ENCODE measurements at regions of chr21 and their contacts with region 1.

Region 1: GRCh38 chr21:33924079-33924765 is 8.6 kb upstream of the ATP5PO start:
- DNase-seq: peak; percentile 94
- ATAC-seq: peak; percentile 94
- H3K4me3 Mint-ChIP-seq: no peak overlapping the region
- H3K27ac Mint-ChIP-seq: no peak overlapping the region
- H3K4me1 Mint-ChIP-seq: peaks cover 15% of the 10 kb centered on the region
- H3K27me3 Mint-ChIP-seq: peaks cover 2% of the 10 kb centered on the region

Region 2: DNA sequence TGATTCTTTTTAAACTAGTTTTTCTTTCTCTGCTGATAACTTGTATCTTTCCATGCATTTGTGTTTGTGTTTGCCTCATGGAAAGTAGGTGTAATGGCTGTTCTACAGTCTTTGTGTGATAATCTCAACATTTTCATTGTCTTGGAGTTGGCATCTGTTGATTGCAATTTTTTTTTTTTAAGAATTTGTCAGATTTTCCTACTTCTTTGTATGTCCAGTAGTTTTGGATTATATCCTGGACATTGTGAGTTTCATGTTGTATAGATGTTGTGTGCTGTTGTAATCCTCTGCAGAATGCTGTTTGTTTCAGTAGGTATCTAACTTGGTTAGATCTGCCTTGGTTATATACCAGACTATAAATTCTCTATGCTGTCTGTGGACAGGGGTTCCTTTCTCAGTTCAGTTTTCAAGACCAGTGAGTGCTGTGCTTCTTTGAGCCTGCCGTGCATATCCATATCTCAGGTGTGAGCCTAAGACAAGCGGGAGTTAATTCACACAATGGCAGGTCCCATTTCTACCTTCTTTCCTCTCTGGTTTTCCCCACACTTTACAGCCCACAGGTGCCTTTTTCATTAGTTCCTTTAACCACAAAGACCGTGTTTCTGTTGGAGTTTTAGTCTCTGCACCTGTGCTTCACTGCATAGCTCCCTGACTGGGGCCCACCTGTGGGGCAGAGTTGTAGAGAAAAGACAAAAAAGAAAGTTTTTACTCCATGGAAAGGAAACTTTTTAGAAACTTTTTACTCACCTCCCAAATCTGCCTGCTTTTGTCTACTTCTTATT is 212.0 kb before region 1 on chr21:
- CTCF ChIA-PET with region 1: no interaction called
- POLR2A ChIA-PET with region 1: no interaction called
- DNase-seq: no peak
- ATAC-seq: no peak
- H3K4me3 Mint-ChIP-seq: no peak overlapping the region
- H3K27ac Mint-ChIP-seq: no peak overlapping the region
- H3K4me1 Mint-ChIP-seq: no peaks in the 10 kb centered on the region
- H3K27me3 Mint-ChIP-seq: no peaks in the 10 kb centered on the region

Region 3: GRCh38 chr21:33844104-33844889 is 79.9 kb before region 1 on chr21:
- CTCF ChIA-PET with region 1: no interaction called
- POLR2A ChIA-PET with region 1: no interaction called
- DNase-seq: no peak
- ATAC-seq: no peak
- H3K4me3 Mint-ChIP-seq: no peak overlapping the region
- H3K27ac Mint-ChIP-seq: no peak overlapping the region
- H3K4me1 Mint-ChIP-seq: no peaks in the 10 kb centered on the region
- H3K27me3 Mint-ChIP-seq: no peaks in the 10 kb centered on the region

Region 4: GRCh38 chr21:33947451-33948095 is 23.4 kb after region 1 on chr21:
- CTCF ChIA-PET with region 1: interaction called, 49 read pairs
- POLR2A ChIA-PET with region 1: interaction called, 26 read pairs
- DNase-seq: peak; percentile 91
- ATAC-seq: peak; percentile 68
- H3K4me3 Mint-ChIP-seq: peak overlapping the region; percentile 63
- H3K27ac Mint-ChIP-seq: peak overlapping the region; percentile 98
- H3K4me1 Mint-ChIP-seq: peaks cover 75% of the 10 kb centered on the region
- H3K27me3 Mint-ChIP-seq: no peaks in the 10 kb centered on the region

Region 5: GRCh38 chr21:34022627-34023335 is 98.6 kb after region 1 on chr21:
- CTCF ChIA-PET with region 1: interaction called, 21 read pairs
- POLR2A ChIA-PET with region 1: no interaction called
- DNase-seq: peak; percentile 51
- ATAC-seq: peak; percentile 54
- H3K4me3 Mint-ChIP-seq: no peak overlapping the region
- H3K27ac Mint-ChIP-seq: no peak overlapping the region
- H3K4me1 Mint-ChIP-seq: peaks cover 34% of the 10 kb centered on the region
- H3K27me3 Mint-ChIP-seq: no peaks in the 10 kb centered on the region

Region 6: GRCh38 chr21:34091607-34092006 is 167.4 kb after region 1 on chr21:
- CTCF ChIA-PET with region 1: interaction called, 36 read pairs
- POLR2A ChIA-PET with region 1: no interaction called
- DNase-seq: no peak
- ATAC-seq: no peak
- H3K4me3 Mint-ChIP-seq: no peak overlapping the region
- H3K27ac Mint-ChIP-seq: no peak overlapping the region
- H3K4me1 Mint-ChIP-seq: peaks cover 43% of the 10 kb centered on the region
- H3K27me3 Mint-ChIP-seq: no peaks in the 10 kb centered on the region

Region 7: DNA sequence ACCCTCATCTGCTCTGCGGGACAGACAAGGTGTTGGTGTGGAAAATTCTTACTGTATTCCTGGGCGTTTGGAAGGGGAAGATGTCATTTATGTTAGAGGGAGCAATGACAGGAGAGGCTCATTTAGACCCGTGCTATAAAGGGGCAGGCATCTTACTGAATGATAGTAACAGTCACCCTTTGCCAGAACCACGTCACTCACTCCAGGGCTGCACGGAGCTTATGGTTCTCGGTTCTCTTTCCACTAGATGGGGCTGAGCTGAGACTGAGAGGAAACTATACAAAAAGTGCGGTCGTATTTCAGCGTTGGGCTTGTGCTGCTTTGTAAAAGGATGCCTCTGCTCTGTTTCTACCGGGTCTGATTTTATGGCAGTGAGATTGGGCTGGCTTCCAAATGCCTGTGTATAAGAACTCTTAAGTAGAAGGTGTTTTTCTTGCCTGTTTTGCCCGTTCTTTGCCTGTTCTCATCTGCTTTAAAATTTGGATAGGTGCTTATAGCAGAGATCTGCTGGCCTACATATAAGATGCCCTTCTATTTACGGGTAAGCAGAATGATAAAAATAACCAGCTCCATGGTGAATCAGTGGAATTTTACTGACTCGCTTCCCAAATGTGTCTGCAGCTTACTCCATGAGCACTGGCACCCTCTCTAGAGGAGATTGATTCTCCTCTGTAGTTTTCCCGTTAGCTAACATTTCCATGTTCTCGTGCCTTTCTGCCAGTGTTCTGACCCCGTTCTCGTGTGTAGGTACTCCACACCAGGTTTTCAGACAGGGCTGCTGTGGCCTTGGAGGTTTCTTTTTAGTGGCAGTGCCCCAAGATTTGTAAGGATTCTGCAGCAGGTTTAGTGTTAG is 205.0 kb after region 1 on chr21:
- CTCF ChIA-PET with region 1: interaction called, 35 read pairs
- POLR2A ChIA-PET with region 1: interaction called, 4 read pairs
- DNase-seq: peak; percentile 85
- ATAC-seq: peak; percentile 90
- H3K4me3 Mint-ChIP-seq: peak overlapping the region; percentile 38
- H3K27ac Mint-ChIP-seq: peak overlapping the region; percentile 83
- H3K4me1 Mint-ChIP-seq: peaks cover 76% of the 10 kb centered on the region
- H3K27me3 Mint-ChIP-seq: no peaks in the 10 kb centered on the region

Region 8: DNA sequence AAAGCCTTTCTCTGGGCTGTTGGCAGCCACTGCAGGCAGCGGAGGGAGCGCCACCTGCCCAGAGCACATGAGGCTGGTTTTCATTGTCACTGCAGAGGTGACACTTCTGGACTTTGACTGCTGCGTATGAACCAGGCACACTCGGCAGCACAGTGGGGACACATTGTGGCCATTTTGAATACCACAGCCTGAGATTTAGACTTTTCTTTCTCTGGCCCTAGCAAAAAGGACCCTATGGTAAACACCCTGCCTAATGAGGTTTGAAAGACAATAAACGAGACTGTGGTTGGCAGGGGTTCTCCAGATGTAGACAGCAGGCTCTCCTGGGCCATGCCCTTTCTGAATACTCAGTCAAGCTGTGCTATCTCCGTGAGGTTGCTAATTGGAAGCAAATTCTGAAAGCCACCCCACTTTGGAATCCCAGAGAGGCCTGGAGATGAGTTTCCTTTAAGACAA is 427.6 kb after region 1 on chr21:
- CTCF ChIA-PET with region 1: interaction called, 260 read pairs
- POLR2A ChIA-PET with region 1: interaction called, 7 read pairs
- DNase-seq: peak; percentile 51
- ATAC-seq: peak; percentile 70
- H3K4me3 Mint-ChIP-seq: no peak overlapping the region
- H3K27ac Mint-ChIP-seq: no peak overlapping the region
- H3K4me1 Mint-ChIP-seq: peaks cover 11% of the 10 kb centered on the region
- H3K27me3 Mint-ChIP-seq: peaks cover 15% of the 10 kb centered on the region